IMR-90 (cell line): ENCODE measurements at regions of chr7 and their contacts with region 1.

Region 1: GRCh38 chr7:141533149-141533949 is 17.9 kb upstream of the AGK start:
- DNase-seq: peak; percentile 74
- ATAC-seq: peak; percentile 89
- H3K4me3 ChIP-seq: no peak overlapping the region
- H3K27ac ChIP-seq: no peak overlapping the region
- H3K4me1 ChIP-seq: no peaks in the 10 kb centered on the region
- H3K27me3 ChIP-seq: 0 out of 2 replicates have a peak, but pooled peaks cover 2% of the 10 kb centered on the region
- CTCF ChIP-seq: peak; percentile 82
- POLR2A ChIP-seq: no peak
- RAD21 ChIP-seq: peak; percentile 80

Region 2: GRCh38 chr7:140673063-140673773 is 860.1 kb before region 1 on chr7:
- CTCF ChIA-PET with region 1: interaction called, 3 read pairs
- POLR2A ChIA-PET with region 1: no interaction called
- dilution Hi-C with region 1: no loop called
- in situ Hi-C with region 1: no loop called
- intact Hi-C with region 1: loop called (anchors 5 kb)
- DNase-seq: no peak
- ATAC-seq: peak; percentile 81
- H3K4me3 ChIP-seq: peak overlapping the region; percentile 71
- H3K27ac ChIP-seq: no peak overlapping the region; the same call in 1 of the 2 replicates
- H3K4me1 ChIP-seq: 0 out of 2 replicates have a peak, but pooled peaks cover 2% of the 10 kb centered on the region
- H3K27me3 ChIP-seq: peaks cover 6% of the 10 kb centered on the region; the same call in 1 of the 2 replicates
- CTCF ChIP-seq: no peak
- POLR2A ChIP-seq: no peak
- RAD21 ChIP-seq: no peak

Region 3: GRCh38 chr7:140726281-140726680 is 807.1 kb before region 1 on chr7:
- CTCF ChIA-PET with region 1: no interaction called
- POLR2A ChIA-PET with region 1: no interaction called
- dilution Hi-C with region 1: no loop called
- in situ Hi-C with region 1: no loop called
- intact Hi-C with region 1: loop called (anchors 5 kb)
- DNase-seq: peak; percentile 23
- ATAC-seq: no peak
- H3K4me3 ChIP-seq: no peak overlapping the region
- H3K27ac ChIP-seq: no peak overlapping the region
- H3K4me1 ChIP-seq: no peaks in the 10 kb centered on the region; the same call in 1 of the 2 replicates
- H3K27me3 ChIP-seq: no peaks in the 10 kb centered on the region
- CTCF ChIP-seq: peak; percentile 36
- POLR2A ChIP-seq: no peak
- RAD21 ChIP-seq: 0 out of 2 replicates have a peak, but pooled peaks have one; percentile 26

Region 4: GRCh38 chr7:141654551-141654950 is 121.2 kb after region 1 on chr7:
- CTCF ChIA-PET with region 1: interaction called, 3 read pairs
- POLR2A ChIA-PET with region 1: no interaction called
- dilution Hi-C with region 1: no loop called
- in situ Hi-C with region 1: no loop called
- intact Hi-C with region 1: loop called (anchors 1 kb)
- DNase-seq: peak; percentile 69
- ATAC-seq: peak; percentile 81
- H3K4me3 ChIP-seq: no peak overlapping the region
- H3K27ac ChIP-seq: no peak overlapping the region
- H3K4me1 ChIP-seq: no peaks in the 10 kb centered on the region
- H3K27me3 ChIP-seq: no peaks in the 10 kb centered on the region
- CTCF ChIP-seq: peak; percentile 78
- POLR2A ChIP-seq: no peak
- RAD21 ChIP-seq: peak; percentile 70